ENCODE measurements at regions of chr1 and their contacts with region 1.

Region 1: GRCh38 chr1:178997428-178997827 is 28.3 kb upstream of the FAM20B start:
- DNase-seq: no peak
- H3K4me3 ChIP-seq: no peak overlapping the region
- H3K27ac ChIP-seq: no peak overlapping the region
- H3K4me1 ChIP-seq: peaks cover 0 to 3% (median 3%) of the 10 kb centered on the region in 4 donors
- H3K27me3 ChIP-seq: no peaks in the 10 kb centered on the region
- CTCF ChIP-seq: no peak
- EP300 ChIP-seq: no peak
- POLR2A ChIP-seq: no peak

Region 2: DNA sequence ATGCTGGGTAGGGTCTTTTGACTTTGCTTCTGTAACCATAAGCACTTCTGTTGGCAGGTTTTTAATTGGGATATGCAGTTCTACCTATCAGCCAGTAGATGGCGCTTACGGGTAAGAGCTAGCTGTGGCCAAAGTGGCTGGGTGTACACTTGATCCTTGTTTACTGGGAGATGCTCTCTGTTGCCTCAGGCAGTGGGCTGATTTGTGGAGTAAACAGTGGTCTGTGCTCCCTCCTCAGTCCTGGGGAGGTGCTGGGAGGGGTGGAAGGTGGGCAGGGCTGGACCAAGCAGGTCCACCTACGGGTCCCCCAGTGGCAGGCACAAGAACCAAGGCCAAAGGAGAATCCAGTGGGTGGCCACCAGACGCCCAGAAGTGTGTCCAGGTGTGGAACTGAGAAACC is 229.0 kb before region 1 on chr1:
- in situ Hi-C with region 1: loop called in 3 of 4 experiments (anchors 10 to 25 kb)
- intact Hi-C with region 1: loop called (anchors 5 kb)
- DNase-seq: no peak
- H3K4me3 ChIP-seq: no peak overlapping the region
- H3K27ac ChIP-seq: no peak overlapping the region
- H3K4me1 ChIP-seq: no peaks in the 10 kb centered on the region
- H3K27me3 ChIP-seq: no peaks in the 10 kb centered on the region
- CTCF ChIP-seq: peak; percentile 43 to 67 (median 55)
- EP300 ChIP-seq: no peak
- POLR2A ChIP-seq: no peak

Region 3: GRCh38 chr1:179058487-179059483 is 61.4 kb after region 1 on chr1:
- in situ Hi-C with region 1: no loop called
- intact Hi-C with region 1: no loop called
- DNase-seq: no peak
- H3K4me3 ChIP-seq: no peak overlapping the region
- H3K27ac ChIP-seq: no peak overlapping the region
- H3K4me1 ChIP-seq: no peaks in the 10 kb centered on the region
- H3K27me3 ChIP-seq: no peaks in the 10 kb centered on the region
- CTCF ChIP-seq: no peak
- EP300 ChIP-seq: no peak
- POLR2A ChIP-seq: no peak